Calu3 (cell line): ENCODE measurements at regions of chr1 and their contacts with region 1.

Region 1: DNA sequence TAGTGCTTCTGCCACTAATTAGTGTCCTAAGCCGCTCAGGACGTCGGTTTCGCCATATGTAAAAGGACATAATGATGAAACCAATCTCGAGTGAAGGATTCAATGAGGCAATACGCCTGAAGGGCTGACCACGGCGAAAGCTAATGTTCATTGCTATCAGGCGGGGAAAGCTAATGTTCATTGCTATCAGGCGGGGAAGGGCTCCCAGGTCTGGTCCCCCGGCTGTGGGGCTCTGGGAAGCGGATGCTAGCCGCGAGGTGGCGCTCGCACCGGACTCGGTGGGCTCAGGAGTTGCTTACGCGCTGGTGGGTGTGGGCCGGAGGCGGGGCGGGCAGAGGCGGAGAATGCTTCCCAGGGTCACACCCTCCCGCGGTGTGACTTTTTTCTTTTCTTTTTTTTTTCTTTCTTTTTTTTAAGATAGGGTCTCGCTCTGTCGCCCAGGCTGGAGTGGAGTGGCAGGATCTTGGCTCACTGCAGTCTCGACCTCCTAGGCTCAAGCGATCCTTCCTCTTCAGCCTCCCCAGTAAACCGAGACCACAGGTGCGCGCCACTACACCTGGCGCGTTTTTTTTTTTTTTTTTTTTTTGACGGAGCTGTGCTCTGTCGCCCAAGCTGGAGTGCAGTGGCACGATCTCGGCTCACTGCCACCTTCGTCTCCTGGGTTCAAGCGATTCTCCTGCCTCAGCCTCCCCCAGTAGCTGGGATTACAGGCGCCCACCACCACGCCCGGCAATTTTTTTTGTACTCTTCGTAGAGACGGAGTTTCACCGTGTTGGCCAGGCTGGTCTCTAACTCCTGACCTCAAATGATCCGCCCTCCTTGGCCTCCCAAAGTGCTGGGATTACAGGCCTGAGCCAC is 1.1 kb upstream of the PEAR1 start:
- DNase-seq: peak; percentile 96
- H3K4me3 Mint-ChIP-seq: peak overlapping the region; percentile 33
- H3K27ac Mint-ChIP-seq: no peak overlapping the region
- H3K4me1 Mint-ChIP-seq: peaks cover 14% of the 10 kb centered on the region
- H3K27me3 Mint-ChIP-seq: peaks cover 58% of the 10 kb centered on the region
- CTCF ChIP-seq: peak; percentile 71

Region 2: GRCh38 chr1:156625436-156626078 is 266.9 kb before region 1 on chr1:
- CTCF ChIA-PET with region 1: interaction called, 4 read pairs
- intact Hi-C with region 1: loop called (anchors 10 kb)
- DNase-seq: peak; percentile 72
- H3K4me3 Mint-ChIP-seq: peak overlapping the region; percentile 45
- H3K27ac Mint-ChIP-seq: no peak overlapping the region
- H3K4me1 Mint-ChIP-seq: peaks cover 12% of the 10 kb centered on the region
- H3K27me3 Mint-ChIP-seq: peaks cover 60% of the 10 kb centered on the region
- CTCF ChIP-seq: peak; percentile 87

Region 3: DNA sequence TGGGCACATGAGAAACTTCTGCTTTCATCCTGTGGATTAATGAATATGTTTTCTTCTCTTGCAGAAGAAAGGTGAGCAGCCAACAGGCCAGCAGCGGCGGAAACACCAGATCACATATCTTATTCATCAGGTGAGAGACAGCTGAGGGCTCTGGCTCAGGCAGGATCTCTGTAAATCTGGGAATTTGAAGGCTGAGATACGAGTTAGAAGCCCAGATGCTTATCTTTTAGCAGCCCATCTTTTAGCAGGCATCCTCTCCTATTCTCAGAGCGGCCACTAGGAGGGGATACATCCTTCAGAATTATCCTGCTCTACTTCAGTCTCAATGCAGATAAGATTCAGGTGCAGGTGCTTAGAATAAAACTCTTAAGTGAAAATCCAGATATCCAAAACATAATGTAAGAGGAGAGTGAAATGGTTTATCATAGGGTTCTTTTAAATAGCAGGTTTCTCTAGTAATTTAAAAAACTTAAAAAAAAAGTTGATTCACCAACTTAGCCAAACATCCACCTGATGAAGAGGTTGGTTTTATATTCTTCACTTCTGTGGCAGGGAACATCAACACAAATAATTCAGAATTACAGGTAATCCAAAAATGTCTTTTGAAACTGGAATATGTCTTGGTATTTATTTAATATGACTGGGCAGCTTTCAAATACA is 95.1 kb before region 1 on chr1:
- CTCF ChIA-PET with region 1: interaction called, 3 read pairs
- intact Hi-C with region 1: loop called (anchors 1 kb)
- DNase-seq: peak; percentile 69
- H3K4me3 Mint-ChIP-seq: no peak overlapping the region
- H3K27ac Mint-ChIP-seq: no peak overlapping the region
- H3K4me1 Mint-ChIP-seq: no peaks in the 10 kb centered on the region
- H3K27me3 Mint-ChIP-seq: no peaks in the 10 kb centered on the region
- CTCF ChIP-seq: peak; percentile 81

Region 4: GRCh38 chr1:156838981-156839410 is 53.4 kb before region 1 on chr1:
- CTCF ChIA-PET with region 1: interaction called, 14 read pairs
- intact Hi-C with region 1: loop called (anchors 2 kb)
- DNase-seq: peak; percentile 47
- H3K4me3 Mint-ChIP-seq: no peak overlapping the region
- H3K27ac Mint-ChIP-seq: no peak overlapping the region
- H3K4me1 Mint-ChIP-seq: no peaks in the 10 kb centered on the region
- H3K27me3 Mint-ChIP-seq: peaks cover 100% of the 10 kb centered on the region
- CTCF ChIP-seq: peak; percentile 93

Region 5: DNA sequence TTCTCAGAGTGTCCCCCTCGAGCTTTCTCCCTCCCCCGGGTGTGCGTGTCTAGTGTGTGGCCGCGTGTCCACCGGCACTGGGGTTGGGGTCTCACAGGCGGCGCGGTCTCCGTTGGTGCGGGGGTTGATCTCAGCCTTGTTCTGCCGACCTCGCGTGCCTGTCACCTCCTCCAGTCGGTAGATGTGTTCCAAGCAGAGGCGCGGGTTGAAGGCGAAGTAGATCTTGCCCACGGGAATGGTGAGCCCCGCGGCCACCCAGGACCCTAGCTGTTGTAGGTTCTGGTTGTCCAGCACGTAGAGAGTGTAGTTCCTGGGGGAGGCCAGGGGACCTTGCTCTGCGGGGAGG is 43.3 kb before region 1 on chr1:
- CTCF ChIA-PET with region 1: no interaction called
- intact Hi-C with region 1: no loop called
- DNase-seq: no peak
- H3K4me3 Mint-ChIP-seq: no peak overlapping the region
- H3K27ac Mint-ChIP-seq: no peak overlapping the region
- H3K4me1 Mint-ChIP-seq: no peaks in the 10 kb centered on the region
- H3K27me3 Mint-ChIP-seq: peaks cover 82% of the 10 kb centered on the region
- CTCF ChIP-seq: no peak

Region 6: GRCh38 chr1:156860113-156860627 is 32.2 kb before region 1 on chr1:
- CTCF ChIA-PET with region 1: interaction called, 14 read pairs
- intact Hi-C with region 1: no loop called
- DNase-seq: peak; percentile 63
- H3K4me3 Mint-ChIP-seq: peak overlapping the region; percentile 58
- H3K27ac Mint-ChIP-seq: no peak overlapping the region
- H3K4me1 Mint-ChIP-seq: peaks cover 28% of the 10 kb centered on the region
- H3K27me3 Mint-ChIP-seq: peaks cover 96% of the 10 kb centered on the region
- CTCF ChIP-seq: peak; percentile 94

Region 7: GRCh38 chr1:156927215-156928042 is 35.0 kb after region 1 on chr1:
- CTCF ChIA-PET with region 1: interaction called, 19 read pairs
- intact Hi-C with region 1: loop called (anchors 1 kb)
- DNase-seq: peak; percentile 89
- H3K4me3 Mint-ChIP-seq: peak overlapping the region; percentile 11
- H3K27ac Mint-ChIP-seq: no peak overlapping the region
- H3K4me1 Mint-ChIP-seq: peaks cover 7% of the 10 kb centered on the region
- H3K27me3 Mint-ChIP-seq: peaks cover 96% of the 10 kb centered on the region
- CTCF ChIP-seq: peak; percentile 89